A549 (cell line): ENCODE measurements at regions of chr6 and their contacts with region 1.

Region 1: DNA sequence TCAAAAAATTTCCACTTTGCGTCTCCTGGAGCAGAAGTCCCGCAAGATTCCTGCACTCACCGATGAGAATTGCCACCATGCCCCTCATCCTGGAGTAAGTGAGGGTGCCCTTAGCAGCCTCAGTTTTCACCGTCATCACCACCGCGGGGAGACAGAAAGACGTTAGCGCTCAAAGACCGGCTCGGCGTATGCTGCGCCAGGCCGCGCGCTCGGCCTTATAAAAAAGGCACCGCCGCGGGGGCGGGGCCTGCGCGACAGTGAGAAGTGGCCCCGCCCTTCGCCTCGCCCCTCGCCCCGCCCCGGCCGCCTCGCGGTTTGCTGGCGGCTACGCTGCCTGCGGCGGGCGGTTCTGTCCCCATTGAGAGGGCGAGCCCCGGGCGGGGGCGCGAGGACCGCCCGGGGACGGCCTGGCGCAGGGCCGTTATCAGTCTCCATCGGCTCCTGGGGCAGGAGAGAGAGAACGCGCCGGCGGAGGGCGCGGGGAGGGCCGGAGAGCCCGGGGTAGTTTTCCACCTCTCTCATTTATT is 122.3 kb upstream of the SLC2A12 start:
- DNase-seq: peak; percentile 35 to 85
- ATAC-seq: peak; percentile 76 to 82
- H3K4me3 ChIP-seq: peak overlapping the region; percentile 81
- H3K27ac ChIP-seq: peak overlapping the region; percentile 99 to 100
- H3K4me1 ChIP-seq: peaks cover 57% of the 10 kb centered on the region
- CTCF ChIP-seq: no peak
- EP300 ChIP-seq: no peak
- POLR2A ChIP-seq: peak; percentile 96
- RAD21 ChIP-seq: peak in 1 of 2 experiments; percentile 22; a peak in 2 of 5 replicates

Region 2: GRCh38 chr6:134145786-134146185 is 28.9 kb before region 1 on chr6:
- CTCF ChIA-PET with region 1: no interaction called
- POLR2A ChIA-PET with region 1: no interaction called
- DNase-seq: no peak
- ATAC-seq: no peak
- H3K4me3 ChIP-seq: no peak overlapping the region
- H3K27ac ChIP-seq: no peak overlapping the region
- H3K4me1 ChIP-seq: no peaks in the 10 kb centered on the region
- CTCF ChIP-seq: no peak
- EP300 ChIP-seq: no peak
- POLR2A ChIP-seq: no peak
- RAD21 ChIP-seq: no peak

Region 3: DNA sequence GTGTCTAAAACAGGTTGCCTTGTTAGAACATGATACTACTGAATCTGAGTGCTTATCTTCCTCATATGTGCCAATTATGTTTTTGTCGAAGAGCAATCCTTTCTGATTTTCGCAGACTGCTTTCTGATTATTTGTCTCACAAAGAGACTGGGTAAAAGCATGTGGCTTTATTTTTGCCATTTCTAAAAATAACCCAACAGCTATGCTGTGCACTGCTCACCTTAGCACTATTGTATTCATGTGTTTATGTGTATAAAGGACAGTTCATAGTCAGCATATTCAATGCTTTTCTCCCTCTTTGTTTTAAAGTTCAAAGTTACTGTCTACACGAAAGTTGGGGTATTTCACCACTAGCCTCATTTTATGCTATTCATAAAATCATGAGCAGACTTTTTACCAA is 16.1 kb after region 1 on chr6:
- CTCF ChIA-PET with region 1: interaction called, 17 read pairs
- POLR2A ChIA-PET with region 1: no interaction called
- DNase-seq: no peak
- ATAC-seq: no peak
- H3K4me3 ChIP-seq: no peak overlapping the region
- H3K27ac ChIP-seq: no peak overlapping the region
- H3K4me1 ChIP-seq: peaks cover 18% of the 10 kb centered on the region; the same call in 2 of the 3 replicates
- CTCF ChIP-seq: no peak
- EP300 ChIP-seq: no peak
- POLR2A ChIP-seq: no peak
- RAD21 ChIP-seq: no peak

Region 4: DNA sequence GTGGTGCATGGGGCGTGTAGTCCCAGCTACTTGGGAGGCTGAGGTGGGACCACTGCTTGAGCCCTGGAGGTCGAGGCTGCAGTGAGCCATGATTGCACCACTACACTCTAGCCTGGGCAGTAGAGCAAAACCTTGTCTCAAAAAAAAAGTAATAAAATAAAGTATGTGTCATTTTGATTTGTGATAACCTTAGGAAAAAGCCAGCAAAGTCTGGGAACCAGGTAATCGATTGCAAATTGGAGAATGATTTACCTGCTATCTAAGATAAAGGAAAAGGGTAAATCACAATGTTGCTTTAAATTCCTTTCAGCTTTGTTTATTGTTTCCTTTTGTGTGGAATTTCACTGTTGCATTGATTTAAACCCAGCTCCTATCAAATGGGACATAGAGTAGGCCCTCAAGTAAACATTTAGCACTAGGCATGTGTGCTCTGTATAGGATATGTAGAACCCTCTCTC is 84.1 kb after region 1 on chr6:
- CTCF ChIA-PET with region 1: no interaction called
- POLR2A ChIA-PET with region 1: no interaction called
- DNase-seq: no peak
- ATAC-seq: no peak
- H3K4me3 ChIP-seq: no peak overlapping the region
- H3K27ac ChIP-seq: no peak overlapping the region
- H3K4me1 ChIP-seq: no peaks in the 10 kb centered on the region
- CTCF ChIP-seq: no peak
- EP300 ChIP-seq: no peak
- POLR2A ChIP-seq: no peak
- RAD21 ChIP-seq: no peak

Region 5: GRCh38 chr6:134640975-134641429 is 466.3 kb after region 1 on chr6:
- CTCF ChIA-PET with region 1: interaction called, 11 read pairs
- POLR2A ChIA-PET with region 1: no interaction called
- DNase-seq: peak; percentile 36 to 78
- ATAC-seq: peak in 1 of 2 experiments; percentile 89; a peak in 4 of 6 replicates
- H3K4me3 ChIP-seq: no peak overlapping the region
- H3K27ac ChIP-seq: peak overlapping the region; percentile 70 to 80
- H3K4me1 ChIP-seq: peaks cover 8% of the 10 kb centered on the region; the same call in 2 of the 3 replicates
- CTCF ChIP-seq: peak; percentile 57
- EP300 ChIP-seq: no peak
- POLR2A ChIP-seq: no peak
- RAD21 ChIP-seq: peak; percentile 67 to 83

Region 6: DNA sequence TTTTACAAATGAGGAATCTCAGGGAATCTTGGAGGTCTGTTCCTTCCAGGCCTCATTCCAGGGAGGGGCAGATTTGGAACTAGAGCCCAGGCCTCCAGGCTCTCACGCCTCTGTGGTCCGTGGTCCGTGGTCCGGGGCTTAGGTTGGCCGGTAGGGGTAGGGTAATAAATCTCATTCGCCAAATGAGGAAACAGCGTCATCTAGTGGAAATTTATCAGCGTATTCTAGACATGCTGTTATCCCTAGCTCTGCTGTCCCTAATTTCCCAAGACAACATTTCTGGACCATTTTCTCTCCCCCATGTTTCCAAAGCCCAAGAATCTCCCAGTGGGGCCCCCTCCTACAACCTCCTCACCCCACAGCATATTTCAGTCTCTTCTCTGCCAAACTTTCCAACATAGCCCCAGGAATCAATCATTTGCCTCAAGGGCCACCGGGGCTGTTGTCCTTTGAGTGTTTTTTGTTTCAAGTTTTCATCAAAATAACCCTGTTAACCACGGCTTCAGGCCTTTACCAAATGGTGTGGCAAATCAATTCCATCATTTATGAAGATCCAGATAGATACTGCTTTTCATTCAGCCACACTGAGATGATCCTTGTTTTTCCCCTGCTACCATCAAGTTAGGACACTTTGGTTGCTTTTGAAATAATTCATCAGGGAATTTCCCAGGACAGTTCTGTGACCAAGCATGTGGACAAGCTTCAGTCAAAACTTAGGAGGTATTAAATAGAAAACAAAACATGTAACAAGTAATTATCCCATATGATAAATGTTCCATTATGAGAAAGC is 648.4 kb after region 1 on chr6:
- CTCF ChIA-PET with region 1: interaction called, 11 read pairs
- POLR2A ChIA-PET with region 1: interaction called, 4 read pairs
- DNase-seq: peak; percentile 66 to 82
- ATAC-seq: peak; percentile 100
- H3K4me3 ChIP-seq: no peak overlapping the region
- H3K27ac ChIP-seq: peak overlapping the region; percentile 61 to 86
- H3K4me1 ChIP-seq: peaks cover 6% of the 10 kb centered on the region; the same call in 2 of the 3 replicates
- CTCF ChIP-seq: peak; percentile 89
- EP300 ChIP-seq: no peak
- POLR2A ChIP-seq: no peak
- RAD21 ChIP-seq: peak; percentile 97